Activated CD8-positive, alpha-beta T cell treated with anti-CD3 and anti-CD28 coated beads, Interleukin-2, amount 10 ng/mL, durations not matched to agents 7 days and 5 days (primary cell): ENCODE measurements at regions of chr4 and their contacts with region 1.

Region 1: GRCh38 chr4:76067652-76068286 is 6.7 kb upstream of the ART3 start:
- DNase-seq: peak; percentile 84
- ATAC-seq: peak; percentile 90
- H3K4me3 Mint-ChIP-seq: no peak overlapping the region
- H3K27ac Mint-ChIP-seq: no peak overlapping the region
- H3K4me1 Mint-ChIP-seq: no peaks in the 10 kb centered on the region
- H3K27me3 Mint-ChIP-seq: no peaks in the 10 kb centered on the region

Region 2: DNA sequence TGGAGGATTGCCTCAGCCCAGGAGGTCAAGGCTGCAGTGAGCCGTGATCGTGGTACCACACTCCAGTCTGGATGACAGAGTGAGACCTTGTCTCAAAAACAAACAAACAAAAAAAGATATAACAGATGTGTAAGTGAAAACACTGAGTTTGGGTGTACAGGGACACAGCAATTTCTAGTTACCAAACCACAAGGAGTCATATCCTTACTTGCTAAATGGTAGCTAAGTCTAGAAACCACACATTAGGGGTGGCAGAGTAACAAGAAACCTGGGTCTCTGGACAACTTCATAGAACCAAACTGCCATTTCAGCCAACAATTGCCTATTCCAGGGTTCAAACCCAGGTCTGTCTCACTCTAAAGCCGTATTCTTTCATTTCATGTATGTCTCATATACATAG is 186.3 kb before region 1 on chr4:
- CTCF ChIA-PET with region 1: no interaction called
- POLR2A ChIA-PET with region 1: no interaction called
- DNase-seq: no peak
- ATAC-seq: no peak
- H3K4me3 Mint-ChIP-seq: no peak overlapping the region
- H3K27ac Mint-ChIP-seq: no peak overlapping the region
- H3K4me1 Mint-ChIP-seq: no peaks in the 10 kb centered on the region
- H3K27me3 Mint-ChIP-seq: peaks cover 8% of the 10 kb centered on the region

Region 3: GRCh38 chr4:76055016-76055415 is 12.8 kb before region 1 on chr4:
- CTCF ChIA-PET with region 1: interaction called, 15 read pairs
- POLR2A ChIA-PET with region 1: no interaction called
- DNase-seq: no peak
- ATAC-seq: peak; percentile 39
- H3K4me3 Mint-ChIP-seq: no peak overlapping the region
- H3K27ac Mint-ChIP-seq: peak overlapping the region; percentile 13
- H3K4me1 Mint-ChIP-seq: peaks cover 22% of the 10 kb centered on the region
- H3K27me3 Mint-ChIP-seq: peaks cover 2% of the 10 kb centered on the region

Region 4: GRCh38 chr4:76334885-76335284 is 267.1 kb after region 1 on chr4:
- CTCF ChIA-PET with region 1: no interaction called
- POLR2A ChIA-PET with region 1: no interaction called
- DNase-seq: no peak
- ATAC-seq: no peak
- H3K4me3 Mint-ChIP-seq: no peak overlapping the region
- H3K27ac Mint-ChIP-seq: no peak overlapping the region
- H3K4me1 Mint-ChIP-seq: no peaks in the 10 kb centered on the region
- H3K27me3 Mint-ChIP-seq: peaks cover 10% of the 10 kb centered on the region